Panc1 (cell line): ENCODE measurements at regions of chr7 and their contacts with region 1.

Region 1: GRCh38 chr7:131302876-131303707 is 24.6 kb upstream of the MKLN1 start:
- DNase-seq: no peak
- ATAC-seq: peak; percentile 83
- H3K4me3 ChIP-seq: no peak overlapping the region
- H3K27ac ChIP-seq: no peak overlapping the region
- H3K4me1 ChIP-seq: peaks cover 5% of the 10 kb centered on the region; the same call in 1 of the 2 replicates
- H3K27me3 ChIP-seq: no peaks in the 10 kb centered on the region
- CTCF ChIP-seq: peak; percentile 81

Region 2: DNA sequence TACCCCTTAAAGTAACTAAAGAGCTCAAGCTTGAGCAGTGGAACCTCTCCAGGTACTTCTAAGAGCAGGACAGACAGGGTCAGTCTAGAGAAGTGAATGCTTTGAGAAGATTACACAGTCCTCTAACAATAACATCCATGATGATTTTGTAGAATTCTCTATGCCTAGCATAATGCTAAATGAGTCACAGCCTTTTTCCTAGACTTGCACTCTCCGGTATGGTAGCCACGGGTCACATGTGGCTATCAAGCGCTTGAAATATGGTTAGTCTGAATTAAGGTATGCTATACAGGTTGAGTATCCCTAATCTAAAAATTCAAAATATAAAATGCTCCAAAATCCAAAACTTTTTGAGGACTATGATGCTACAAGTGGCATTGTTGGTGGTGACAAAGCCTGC is 142.0 kb before region 1 on chr7:
- CTCF ChIA-PET with region 1: interaction called, 4 read pairs
- POLR2A ChIA-PET with region 1: interaction called, 13 read pairs
- in situ Hi-C with region 1: no loop called
- intact Hi-C with region 1: no loop called
- DNase-seq: no peak
- ATAC-seq: no peak
- H3K4me3 ChIP-seq: no peak overlapping the region
- H3K27ac ChIP-seq: no peak overlapping the region
- H3K4me1 ChIP-seq: peaks cover 30% of the 10 kb centered on the region
- H3K27me3 ChIP-seq: no peaks in the 10 kb centered on the region
- CTCF ChIP-seq: no peak

Region 3: DNA sequence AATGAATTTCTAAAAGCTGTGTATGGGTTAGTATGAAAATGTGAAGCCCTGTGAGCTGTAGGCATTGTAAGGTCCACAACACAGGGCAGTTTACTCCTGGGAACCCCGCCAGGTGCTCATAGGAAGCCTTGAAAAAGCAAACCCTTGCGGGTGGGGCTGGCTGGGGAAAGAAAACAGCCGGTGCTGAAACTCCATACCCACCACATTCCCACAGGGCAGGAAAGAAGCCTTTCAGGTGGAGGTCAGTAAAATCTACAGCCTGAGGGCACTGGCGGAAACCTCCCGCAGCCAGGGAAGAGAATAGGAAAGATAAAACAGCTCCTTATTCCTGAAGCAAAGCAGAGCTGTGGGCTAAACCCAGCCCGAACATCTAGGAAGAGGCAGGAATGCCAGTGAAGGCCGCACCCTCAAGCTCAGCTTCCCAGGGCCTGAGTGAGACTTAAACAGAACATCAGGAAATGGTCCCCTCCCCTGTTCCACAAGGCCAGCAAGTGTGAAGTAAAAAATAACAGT is 218.6 kb after region 1 on chr7:
- CTCF ChIA-PET with region 1: no interaction called
- POLR2A ChIA-PET with region 1: no interaction called
- in situ Hi-C with region 1: no loop called
- intact Hi-C with region 1: no loop called
- DNase-seq: no peak
- ATAC-seq: peak; percentile 74
- H3K4me3 ChIP-seq: peak overlapping the region in 1 of 2 experiments; percentile 28; a peak in 2 of 4 replicates
- H3K27ac ChIP-seq: no peak overlapping the region; the same call in 1 of the 2 replicates
- H3K4me1 ChIP-seq: no peaks in the 10 kb centered on the region
- H3K27me3 ChIP-seq: no peaks in the 10 kb centered on the region
- CTCF ChIP-seq: no peak